Activated T-helper 1 cell treated with anti-CD3 and anti-CD28 coated beads, Interleukin-12 subunit alpha, Interleukin-12 subunit beta, Interleukin-2, Interleukin-4 antibody, amounts not matched to agents 30 ng/mL and 10 ng/mL and 1 ng/mL, durations not matched to agents 14 hours and 24 hours and 36 hours (primary cell): ENCODE measurements at regions of chr2 and their contacts with region 1.

Region 1: GRCh38 chr2:216412022-216412999 is at the start of gene SMARCAL1:
- DNase-seq: peak; percentile 97
- H3K4me3 Mint-ChIP-seq: peak within 1 kb of the TSS; percentile 99
- H3K27ac Mint-ChIP-seq: peak within 1 kb of the TSS; percentile 89
- H3K4me1 Mint-ChIP-seq: peaks cover 19% of the 10 kb centered on the region
- H3K27me3 Mint-ChIP-seq: no peaks in the 10 kb centered on the region
- total RNA-seq, gene SMARCAL1: 28.0 and 29.1 TPM in 2 replicates

Region 2: GRCh38 chr2:216013080-216013909 is 399.0 kb before region 1 on chr2 and contains the start of gene MREG:
- intact Hi-C with region 1: loop called (anchors 5 kb)
- DNase-seq: peak; percentile 74
- H3K4me3 Mint-ChIP-seq: peak within 1 kb of the TSS; percentile 80
- H3K27ac Mint-ChIP-seq: peak within 1 kb of the TSS; percentile 56
- H3K4me1 Mint-ChIP-seq: peaks cover 53% of the 10 kb centered on the region
- H3K27me3 Mint-ChIP-seq: peaks cover 2% of the 10 kb centered on the region
- total RNA-seq, gene MREG: 9.2 and 10.1 TPM in 2 replicates

Region 3: GRCh38 chr2:216108967-216109921 is 303.1 kb before region 1 on chr2 and contains the start of gene XRCC5:
- intact Hi-C with region 1: loop called (anchors 1 kb)
- DNase-seq: peak; percentile 95
- H3K4me3 Mint-ChIP-seq: peak within 1 kb of the TSS; percentile 99
- H3K27ac Mint-ChIP-seq: peak within 1 kb of the TSS; percentile 98
- H3K4me1 Mint-ChIP-seq: peaks cover 48% of the 10 kb centered on the region
- H3K27me3 Mint-ChIP-seq: no peaks in the 10 kb centered on the region
- total RNA-seq, gene XRCC5: 430 and 484 TPM in 2 replicates

Region 4: DNA sequence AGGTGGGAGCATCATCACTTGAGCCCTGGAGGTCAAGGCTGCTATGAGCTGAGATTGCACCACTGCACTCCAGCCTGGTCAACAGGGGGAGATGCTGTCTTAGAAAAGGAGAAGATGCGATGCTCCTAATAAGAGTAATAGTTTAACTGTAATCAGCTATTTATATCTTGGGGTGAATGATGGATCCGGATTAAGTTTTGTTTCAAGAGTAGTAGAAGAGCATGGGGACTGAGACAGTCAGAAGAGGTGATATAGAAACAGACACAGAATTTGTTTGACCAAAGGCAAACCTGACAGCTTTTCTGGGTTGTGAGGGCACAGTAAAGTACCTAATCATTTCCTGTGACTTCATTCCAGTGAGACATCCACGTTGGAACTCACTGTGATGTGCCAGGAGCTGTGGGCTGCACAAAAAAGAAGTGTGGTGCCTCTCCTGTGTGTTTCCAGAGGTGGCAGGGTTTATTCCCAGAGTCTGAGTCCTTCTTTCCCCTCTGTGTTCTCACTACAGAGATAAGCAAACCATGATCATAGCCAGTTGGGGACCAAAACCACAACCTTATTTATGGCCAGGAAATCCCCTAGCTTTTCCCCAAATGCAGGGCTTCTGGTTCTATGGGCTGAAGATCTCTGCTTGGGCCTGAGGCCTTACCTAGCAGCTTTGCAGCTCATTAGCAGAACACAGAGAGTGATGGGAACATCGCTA is 189.5 kb before region 1 on chr2:
- intact Hi-C with region 1: loop called (anchors 5 kb)
- DNase-seq: peak; percentile 14
- H3K4me3 Mint-ChIP-seq: peak overlapping the region; percentile 3
- H3K27ac Mint-ChIP-seq: peak overlapping the region; percentile 75
- H3K4me1 Mint-ChIP-seq: peaks cover 56% of the 10 kb centered on the region
- H3K27me3 Mint-ChIP-seq: no peaks in the 10 kb centered on the region

Region 5: DNA sequence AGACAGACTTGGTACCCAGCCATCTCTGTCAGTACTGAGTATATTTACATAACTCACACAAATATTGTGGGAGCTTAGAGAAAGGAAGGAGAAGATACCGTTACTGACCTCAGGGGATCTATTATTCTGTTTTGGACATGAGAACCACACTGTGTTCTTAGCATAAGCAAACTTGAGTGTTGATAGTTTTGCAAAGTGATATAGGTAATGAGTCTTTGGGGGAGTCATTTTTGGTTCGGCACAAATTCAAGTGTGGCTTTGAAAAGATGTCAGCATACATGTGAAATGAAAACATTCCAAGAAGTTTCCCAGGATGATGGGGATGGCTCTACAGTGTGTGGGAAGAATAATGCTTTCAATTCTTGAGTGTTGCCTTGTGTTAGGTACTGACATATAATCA is 24.1 kb after region 1 on chr2:
- intact Hi-C with region 1: no loop called
- DNase-seq: no peak
- H3K4me3 Mint-ChIP-seq: no peak overlapping the region
- H3K27ac Mint-ChIP-seq: no peak overlapping the region
- H3K4me1 Mint-ChIP-seq: no peaks in the 10 kb centered on the region
- H3K27me3 Mint-ChIP-seq: no peaks in the 10 kb centered on the region

Region 6: DNA sequence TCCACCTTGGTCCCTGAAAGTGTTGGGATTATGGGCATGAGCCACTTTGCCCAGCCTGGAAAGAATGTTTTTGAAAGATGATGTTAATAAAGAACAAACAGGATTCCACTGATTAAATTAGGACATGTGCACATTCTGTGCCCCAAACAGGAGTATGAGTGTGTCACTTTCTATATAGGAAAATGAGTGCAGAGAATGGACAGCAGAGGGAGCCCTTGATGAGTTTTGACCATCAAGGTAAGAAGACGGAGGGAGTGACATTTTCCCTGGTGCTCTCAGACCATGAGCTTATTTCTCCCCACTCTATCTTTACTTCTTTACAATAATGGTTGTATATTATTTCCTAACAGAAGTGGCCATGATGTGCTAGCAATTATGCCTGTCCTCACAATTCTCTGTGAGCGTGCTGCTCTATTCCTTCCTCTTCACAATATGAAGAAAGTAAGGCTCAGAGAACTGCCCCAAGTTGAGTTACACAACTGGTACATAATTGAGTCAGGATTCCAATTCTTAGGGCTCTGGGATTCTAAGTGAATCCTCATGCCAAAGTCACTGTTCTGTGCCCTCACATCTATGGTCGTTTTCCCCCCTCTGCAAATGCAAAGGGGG is 106.9 kb after region 1 on chr2:
- intact Hi-C with region 1: no loop called
- DNase-seq: peak; percentile 39
- H3K4me3 Mint-ChIP-seq: no peak overlapping the region
- H3K27ac Mint-ChIP-seq: no peak overlapping the region
- H3K4me1 Mint-ChIP-seq: no peaks in the 10 kb centered on the region
- H3K27me3 Mint-ChIP-seq: no peaks in the 10 kb centered on the region

Region 7: DNA sequence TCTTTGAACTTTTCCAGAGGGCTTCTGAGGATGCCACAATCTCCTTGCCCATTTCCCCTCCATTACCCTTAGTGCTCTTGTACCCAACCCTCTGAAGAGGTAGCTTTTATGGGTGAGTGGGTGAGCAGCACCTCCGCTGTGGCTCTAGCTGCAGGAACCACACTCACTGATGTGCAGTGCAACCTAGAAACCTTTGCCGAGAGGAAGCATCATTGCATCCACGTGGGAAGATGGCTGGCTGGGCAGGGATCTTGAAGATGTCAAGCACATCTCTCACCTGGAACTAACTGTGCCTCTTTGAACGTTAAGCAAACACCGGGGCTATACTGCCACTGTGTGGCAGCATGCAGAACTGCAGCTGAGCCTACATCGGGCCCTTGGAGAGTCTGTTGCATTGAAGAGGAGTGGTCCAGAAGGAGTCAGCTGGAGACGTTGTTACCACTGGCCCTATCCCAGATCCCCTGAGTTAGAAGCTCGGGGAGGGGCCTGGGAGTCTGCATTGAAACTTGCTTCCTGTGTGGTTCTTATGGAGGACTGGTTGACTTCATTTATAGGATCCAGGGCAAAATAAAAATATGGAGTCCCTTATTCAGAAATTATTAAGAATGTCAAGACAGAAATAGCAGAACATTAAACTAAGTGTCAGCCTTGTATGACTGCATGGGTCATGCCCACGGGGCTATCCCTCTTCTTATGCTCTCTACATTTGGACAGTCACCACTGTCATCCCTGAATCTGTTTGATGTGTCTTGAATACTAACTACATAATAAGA is 254.3 kb after region 1 on chr2:
- intact Hi-C with region 1: loop called (anchors 10 kb)
- DNase-seq: peak; percentile 62
- H3K4me3 Mint-ChIP-seq: no peak overlapping the region
- H3K27ac Mint-ChIP-seq: no peak overlapping the region
- H3K4me1 Mint-ChIP-seq: no peaks in the 10 kb centered on the region
- H3K27me3 Mint-ChIP-seq: peaks cover 2% of the 10 kb centered on the region